SK-N-SH (cell line): ENCODE measurements at regions of chr11 and their contacts with region 1.

Region 1: GRCh38 chr11:20671856-20672546 is 2.6 kb downstream of the NELL1 start:
- DNase-seq: peak; percentile 67
- H3K4me3 ChIP-seq: peak overlapping the region in 1 of 2 experiments; percentile 52; a peak in 1 of 4 replicates
- H3K27ac ChIP-seq: peak overlapping the region in 1 of 2 experiments; percentile 77; a peak in 2 of 4 replicates
- H3K4me1 ChIP-seq: peaks cover 0 to 32% of the 10 kb centered on the region in 2 experiments; a peak in 2 of 4 replicates
- H3K27me3 ChIP-seq: peaks cover 36% of the 10 kb centered on the region
- CTCF ChIP-seq: peak; percentile 41
- EP300 ChIP-seq: peak in 1 of 2 experiments; percentile 79; a peak in 2 of 4 replicates
- RAD21 ChIP-seq: peak; percentile 37

Region 2: GRCh38 chr11:20459865-20460264 is 212.1 kb before region 1 on chr11:
- CTCF ChIA-PET with region 1: no interaction called
- POLR2A ChIA-PET with region 1: no interaction called
- DNase-seq: no peak
- H3K4me3 ChIP-seq: no peak overlapping the region
- H3K27ac ChIP-seq: peak overlapping the region in 1 of 2 experiments; percentile 47; a peak in 2 of 4 replicates
- H3K4me1 ChIP-seq: peaks cover 0 to 3% of the 10 kb centered on the region in 2 experiments; a peak in 2 of 4 replicates
- H3K27me3 ChIP-seq: no peaks in the 10 kb centered on the region
- CTCF ChIP-seq: no peak
- EP300 ChIP-seq: no peak
- RAD21 ChIP-seq: no peak

Region 3: DNA sequence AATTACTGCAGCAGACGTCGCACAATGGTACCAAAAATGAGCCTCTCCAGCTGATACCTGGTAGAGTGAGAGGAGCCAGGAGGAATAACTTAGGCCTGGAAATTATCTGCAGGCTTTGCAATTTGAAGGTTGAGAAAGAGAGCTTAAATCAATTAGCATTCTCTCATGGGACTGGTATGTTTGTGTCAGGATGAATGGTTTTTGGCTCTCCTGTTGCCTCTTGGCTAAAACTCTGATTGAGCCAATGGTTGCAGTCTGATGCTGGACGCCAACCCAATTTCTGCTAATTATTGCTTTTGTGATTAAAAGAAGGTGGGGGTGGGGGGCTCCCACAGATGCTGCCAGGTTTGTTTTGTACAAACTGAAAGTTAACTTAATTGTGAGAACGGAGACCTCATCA is 15.1 kb before region 1 on chr11:
- CTCF ChIA-PET with region 1: interaction called, 25 read pairs
- POLR2A ChIA-PET with region 1: no interaction called
- DNase-seq: no peak
- H3K4me3 ChIP-seq: no peak overlapping the region
- H3K27ac ChIP-seq: no peak overlapping the region; a peak in 1 of 4 replicates
- H3K4me1 ChIP-seq: peaks cover 0 to 19% of the 10 kb centered on the region in 2 experiments; a peak in 1 of 4 replicates
- H3K27me3 ChIP-seq: no peaks in the 10 kb centered on the region
- CTCF ChIP-seq: no peak
- EP300 ChIP-seq: no peak
- RAD21 ChIP-seq: no peak

Region 4: GRCh38 chr11:21250196-21250595 is 578.2 kb after region 1 on chr11:
- CTCF ChIA-PET with region 1: no interaction called
- POLR2A ChIA-PET with region 1: interaction called, 10 read pairs
- DNase-seq: no peak
- H3K4me3 ChIP-seq: no peak overlapping the region
- H3K27ac ChIP-seq: no peak overlapping the region
- H3K4me1 ChIP-seq: no peaks in the 10 kb centered on the region; a peak in 1 of 4 replicates
- H3K27me3 ChIP-seq: no peaks in the 10 kb centered on the region
- CTCF ChIP-seq: no peak
- EP300 ChIP-seq: no peak
- RAD21 ChIP-seq: no peak

Region 5: DNA sequence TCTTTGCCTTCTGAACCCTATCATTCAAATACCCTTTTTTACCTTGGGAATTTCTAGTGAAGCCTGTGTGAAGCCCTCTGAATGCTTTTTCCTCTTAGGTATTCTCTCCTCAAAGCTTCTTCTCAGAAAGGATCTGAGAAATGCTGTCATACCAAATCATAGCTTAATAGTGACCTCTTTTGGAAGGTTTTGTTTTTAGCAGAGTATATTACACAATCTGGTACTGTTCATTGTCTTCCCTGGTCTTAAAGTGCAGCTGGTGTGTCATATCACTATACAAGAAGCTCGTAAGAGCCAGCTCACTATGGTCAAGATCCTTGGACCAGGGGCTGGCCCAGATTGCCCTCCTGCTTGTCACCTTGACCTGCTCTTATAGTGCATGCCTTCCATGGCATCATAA is 1316.5 kb after region 1 on chr11:
- CTCF ChIA-PET with region 1: interaction called, 11 read pairs
- POLR2A ChIA-PET with region 1: no interaction called
- DNase-seq: peak; percentile 12
- H3K4me3 ChIP-seq: no peak overlapping the region
- H3K27ac ChIP-seq: peak overlapping the region in 1 of 2 experiments; percentile 60; a peak in 2 of 4 replicates
- H3K4me1 ChIP-seq: peaks cover 0 to 6% of the 10 kb centered on the region in 2 experiments; a peak in 1 of 4 replicates
- H3K27me3 ChIP-seq: no peaks in the 10 kb centered on the region
- CTCF ChIP-seq: no peak
- EP300 ChIP-seq: no peak
- RAD21 ChIP-seq: peak; percentile 74